SK-N-SH (cell line): ENCODE measurements at regions of chrX and their contacts with region 1.

Region 1: GRCh38 chrX:22081475-22082092 is 49.5 kb downstream of the PHEX start:
- DNase-seq: peak; percentile 22
- H3K4me3 ChIP-seq: no peak overlapping the region
- H3K27ac ChIP-seq: no peak overlapping the region
- H3K4me1 ChIP-seq: no peaks in the 10 kb centered on the region
- H3K27me3 ChIP-seq: no peaks in the 10 kb centered on the region
- CTCF ChIP-seq: peak; percentile 94
- EP300 ChIP-seq: no peak
- RAD21 ChIP-seq: peak; percentile 57

Region 2: GRCh38 chrX:22069586-22069985 is 12.0 kb before region 1 on chrX:
- CTCF ChIA-PET with region 1: interaction called, 23 read pairs
- POLR2A ChIA-PET with region 1: no interaction called
- DNase-seq: no peak
- H3K4me3 ChIP-seq: no peak overlapping the region
- H3K27ac ChIP-seq: no peak overlapping the region
- H3K4me1 ChIP-seq: no peaks in the 10 kb centered on the region
- H3K27me3 ChIP-seq: no peaks in the 10 kb centered on the region; the same call in 1 of the 2 replicates
- CTCF ChIP-seq: no peak
- EP300 ChIP-seq: no peak
- RAD21 ChIP-seq: no peak

Region 3: GRCh38 chrX:22095286-22095685 is 13.7 kb after region 1 on chrX:
- CTCF ChIA-PET with region 1: interaction called, 26 read pairs
- POLR2A ChIA-PET with region 1: no interaction called
- DNase-seq: no peak
- H3K4me3 ChIP-seq: no peak overlapping the region
- H3K27ac ChIP-seq: no peak overlapping the region
- H3K4me1 ChIP-seq: no peaks in the 10 kb centered on the region
- H3K27me3 ChIP-seq: no peaks in the 10 kb centered on the region
- CTCF ChIP-seq: no peak
- EP300 ChIP-seq: no peak
- RAD21 ChIP-seq: no peak